A673 (cell line): ENCODE measurements at regions of chr3 and their contacts with region 1.

Region 1: DNA sequence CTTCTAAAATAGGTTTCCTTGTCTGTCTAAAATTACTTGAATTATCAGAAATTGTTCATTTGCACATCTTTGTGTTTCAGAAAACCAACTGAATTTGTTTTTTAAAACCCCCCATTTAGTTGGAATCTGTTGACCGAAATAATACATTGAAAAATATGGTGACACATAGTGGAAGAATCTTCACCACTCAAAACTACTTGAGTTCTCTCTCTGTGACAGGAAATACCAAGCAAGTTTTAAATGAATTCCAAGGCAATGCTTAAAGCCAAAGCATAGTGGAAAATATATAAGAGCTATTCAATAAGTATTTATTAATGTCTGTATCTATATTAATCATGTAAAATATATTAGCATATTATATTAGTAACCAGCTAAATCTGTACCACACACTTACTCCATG is 224.9 kb upstream of the COL8A1 start:
- DNase-seq: peak; percentile 38
- H3K4me3 ChIP-seq: no peak overlapping the region
- H3K27ac ChIP-seq: peak overlapping the region; percentile 39
- H3K4me1 ChIP-seq: no peaks in the 10 kb centered on the region
- H3K27me3 ChIP-seq: no peaks in the 10 kb centered on the region
- CTCF ChIP-seq: no peak

Region 2: GRCh38 chr3:99087277-99087676 is 326.2 kb before region 1 on chr3:
- CTCF ChIA-PET with region 1: no interaction called
- POLR2A ChIA-PET with region 1: interaction called, 10 read pairs
- intact Hi-C with region 1: no loop called
- DNase-seq: no peak
- H3K4me3 ChIP-seq: no peak overlapping the region
- H3K27ac ChIP-seq: no peak overlapping the region
- H3K4me1 ChIP-seq: no peaks in the 10 kb centered on the region
- H3K27me3 ChIP-seq: no peaks in the 10 kb centered on the region
- CTCF ChIP-seq: no peak

Region 3: GRCh38 chr3:99859825-99860224 is 446.3 kb after region 1 on chr3:
- CTCF ChIA-PET with region 1: no interaction called
- POLR2A ChIA-PET with region 1: no interaction called
- intact Hi-C with region 1: no loop called
- DNase-seq: peak; percentile 49
- H3K4me3 ChIP-seq: no peak overlapping the region
- H3K27ac ChIP-seq: no peak overlapping the region
- H3K4me1 ChIP-seq: peaks cover 20% of the 10 kb centered on the region
- H3K27me3 ChIP-seq: no peaks in the 10 kb centered on the region
- CTCF ChIP-seq: no peak